Thyroid gland (tissue), 4 donors: ENCODE measurements at regions of chr18 and their contacts with region 1.

Region 1: GRCh38 chr18:79378542-79379250 is 17.0 kb upstream of the NFATC1 start:
- DNase-seq: peak; percentile 72 to 76
- H3K4me3 ChIP-seq: no peak overlapping the region
- H3K27ac ChIP-seq: no peak overlapping the region
- H3K4me1 ChIP-seq: no peaks in the 10 kb centered on the region
- H3K27me3 ChIP-seq: no peaks in the 10 kb centered on the region
- CTCF ChIP-seq: peak; percentile 81 to 95 (median 88)
- POLR2A ChIP-seq: no peak

Region 2: DNA sequence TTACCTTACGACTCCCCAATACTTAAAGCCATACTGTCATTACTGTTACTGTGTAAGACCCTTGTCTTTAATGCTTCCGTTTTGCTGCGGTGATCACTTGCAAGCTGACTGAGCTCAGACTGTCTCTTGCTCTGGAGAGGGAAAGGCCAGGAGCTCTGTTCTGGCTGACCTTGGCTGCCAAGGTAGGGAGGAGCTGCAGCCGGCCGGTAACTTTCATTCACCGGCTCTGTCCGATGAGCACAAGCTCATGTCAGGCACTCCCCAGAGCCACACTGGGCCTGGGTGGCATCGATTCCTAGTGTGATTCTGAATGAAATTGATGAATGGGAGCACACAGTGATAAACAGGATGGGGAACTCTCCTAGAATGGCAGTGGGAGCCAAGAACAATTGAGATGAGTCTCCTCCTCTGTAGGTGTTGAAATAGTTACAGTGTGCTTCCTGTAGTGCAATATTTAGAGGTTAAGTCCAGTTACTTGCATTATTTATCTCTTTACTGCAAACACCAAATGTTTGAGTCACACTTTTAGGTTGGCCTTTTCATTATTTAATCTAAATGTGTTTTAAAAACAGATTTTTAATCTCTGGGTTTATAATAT is 208.6 kb before region 1 on chr18:
- intact Hi-C with region 1: no loop called
- DNase-seq: no peak
- H3K4me3 ChIP-seq: no peak overlapping the region
- H3K27ac ChIP-seq: no peak overlapping the region
- H3K4me1 ChIP-seq: no peaks in the 10 kb centered on the region
- H3K27me3 ChIP-seq: no peaks in the 10 kb centered on the region
- CTCF ChIP-seq: no peak
- POLR2A ChIP-seq: no peak

Region 3: DNA sequence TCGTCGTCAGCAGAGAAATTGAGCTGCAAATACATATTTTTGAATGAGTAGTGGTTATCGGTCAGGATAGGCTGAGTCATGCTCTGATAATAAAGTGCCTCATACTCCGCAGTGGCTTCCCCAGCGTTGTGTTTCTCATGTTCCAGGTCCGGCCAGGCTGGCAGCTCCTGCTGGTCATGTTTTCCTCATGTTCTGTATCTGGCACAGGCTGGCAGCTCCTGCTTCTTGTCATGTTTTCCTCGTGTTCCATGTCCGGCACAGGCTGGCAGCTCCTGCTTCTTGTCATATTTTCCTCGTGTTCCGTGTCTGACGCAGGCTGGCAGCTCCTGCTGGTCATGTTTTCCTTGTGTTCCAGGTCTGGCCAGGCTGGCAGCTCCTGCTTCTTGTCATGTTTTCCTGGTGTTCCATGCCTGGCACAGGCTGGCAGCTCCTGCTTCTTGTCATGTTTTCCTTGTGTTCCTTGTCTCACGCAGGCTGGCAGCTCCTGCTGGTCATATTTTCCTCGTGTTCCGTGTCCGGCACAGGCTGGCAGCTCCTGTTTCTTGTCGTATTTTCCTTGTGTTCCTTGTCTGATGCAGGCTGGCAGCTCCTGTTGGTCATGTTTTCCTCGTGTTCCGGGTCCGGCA is 160.6 kb before region 1 on chr18:
- intact Hi-C with region 1: no loop called
- DNase-seq: no peak
- H3K4me3 ChIP-seq: no peak overlapping the region
- H3K27ac ChIP-seq: no peak overlapping the region
- H3K4me1 ChIP-seq: peaks cover 0 to 9% of the 10 kb centered on the region in 2 donors
- H3K27me3 ChIP-seq: no peaks in the 10 kb centered on the region
- CTCF ChIP-seq: no peak
- POLR2A ChIP-seq: no peak

Region 4: DNA sequence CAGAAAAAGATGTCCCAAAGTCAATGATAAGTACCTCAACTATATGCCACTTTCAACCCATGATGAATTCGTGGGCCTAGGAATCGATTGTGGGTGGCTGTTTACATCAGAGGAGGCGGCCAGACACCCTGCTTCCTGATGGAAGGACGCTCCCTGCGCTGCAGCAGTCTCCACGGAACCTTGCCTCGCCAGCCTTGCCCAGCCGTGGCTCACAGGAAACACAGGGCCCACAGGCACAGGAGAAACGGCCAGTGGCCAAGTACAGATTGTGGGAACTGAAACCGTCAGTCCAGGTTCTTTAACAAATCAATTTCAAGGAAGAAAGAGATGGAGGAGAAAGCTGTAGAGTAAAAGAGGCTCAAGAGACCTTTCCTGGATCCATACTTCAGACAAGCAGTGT is 84.5 kb before region 1 on chr18:
- intact Hi-C with region 1: no loop called
- DNase-seq: no peak
- H3K4me3 ChIP-seq: no peak overlapping the region
- H3K27ac ChIP-seq: no peak overlapping the region
- H3K4me1 ChIP-seq: no peaks in the 10 kb centered on the region
- H3K27me3 ChIP-seq: no peaks in the 10 kb centered on the region
- CTCF ChIP-seq: no peak
- POLR2A ChIP-seq: no peak

Region 5: DNA sequence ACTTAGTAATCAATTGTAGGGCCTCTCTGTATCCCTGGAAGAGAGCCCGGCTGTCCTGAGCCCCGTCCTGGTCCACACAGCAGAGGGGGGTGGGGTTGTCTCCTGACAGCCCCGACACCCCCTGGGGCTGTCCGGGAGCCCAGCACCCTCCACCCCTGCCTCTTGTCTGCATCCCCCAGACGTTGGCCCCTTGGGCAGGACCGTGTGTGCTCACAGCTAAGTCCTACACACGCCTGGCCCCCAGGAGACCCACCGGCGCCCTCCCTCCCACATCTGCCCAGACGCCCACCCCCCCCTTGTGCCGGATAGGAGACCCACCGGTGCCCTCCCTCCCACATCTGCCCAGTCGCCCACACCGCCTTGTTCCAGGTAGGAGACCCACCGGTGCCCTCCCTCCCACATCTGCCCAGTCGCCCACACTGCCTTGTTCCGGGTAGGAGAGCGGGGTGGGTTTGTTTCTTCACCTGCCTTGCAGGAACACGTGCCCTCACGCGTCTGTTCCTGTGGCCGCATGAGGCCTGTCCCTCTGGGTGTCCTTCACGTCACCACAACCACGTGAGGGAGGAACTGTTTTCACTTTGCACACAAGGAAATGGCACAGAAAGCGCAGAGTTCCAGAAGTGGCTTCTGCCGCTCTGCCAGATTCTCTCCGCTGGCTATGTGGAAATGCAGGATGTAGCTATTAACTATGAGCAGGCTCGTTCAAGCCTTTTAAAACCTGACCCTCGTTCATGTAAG is 44.0 kb before region 1 on chr18:
- intact Hi-C with region 1: no loop called
- DNase-seq: no peak
- H3K4me3 ChIP-seq: no peak overlapping the region
- H3K27ac ChIP-seq: no peak overlapping the region
- H3K4me1 ChIP-seq: no peaks in the 10 kb centered on the region
- H3K27me3 ChIP-seq: no peaks in the 10 kb centered on the region
- CTCF ChIP-seq: no peak
- POLR2A ChIP-seq: no peak

Region 6: DNA sequence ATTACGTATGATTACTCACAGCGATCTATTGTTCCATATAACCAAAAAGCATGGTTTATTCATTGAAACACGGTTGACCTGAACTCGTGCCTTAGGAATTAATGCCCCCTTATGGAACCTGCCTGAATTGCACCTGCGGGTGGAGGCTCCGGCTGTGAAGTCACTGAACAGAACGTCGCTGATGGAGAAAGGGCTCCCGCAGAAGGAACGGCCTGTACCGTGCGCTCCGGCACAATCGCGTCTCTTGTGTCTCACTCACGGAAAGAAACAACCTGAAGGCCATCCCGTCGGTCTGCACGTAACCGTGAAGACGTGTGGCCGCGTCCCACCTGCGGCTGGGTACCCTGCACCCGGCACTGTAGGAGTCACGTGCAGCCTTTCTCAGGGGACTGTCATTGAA is 150.2 kb after region 1 on chr18:
- intact Hi-C with region 1: loop called (anchors 2 kb)
- DNase-seq: peak; percentile 61 to 64
- H3K4me3 ChIP-seq: no peak overlapping the region
- H3K27ac ChIP-seq: no peak overlapping the region
- H3K4me1 ChIP-seq: peaks cover 4 to 9% of the 10 kb centered on the region in 2 donors
- H3K27me3 ChIP-seq: no peaks in the 10 kb centered on the region
- CTCF ChIP-seq: peak; percentile 58 to 89 (median 74)
- POLR2A ChIP-seq: no peak

Region 7: GRCh38 chr18:79644006-79644665 is 265.4 kb after region 1 on chr18:
- intact Hi-C with region 1: loop called (anchors 2 kb)
- DNase-seq: peak; percentile 50 to 60
- H3K4me3 ChIP-seq: no peak overlapping the region
- H3K27ac ChIP-seq: no peak overlapping the region
- H3K4me1 ChIP-seq: no peaks in the 10 kb centered on the region
- H3K27me3 ChIP-seq: no peaks in the 10 kb centered on the region
- CTCF ChIP-seq: peak; percentile 87 to 99 (median 90)
- POLR2A ChIP-seq: no peak